Endothelial cell of umbilical vein (primary cell): ENCODE measurements at regions of chr19 and their contacts with region 1.

Region 1: GRCh38 chr19:54297760-54298305 is 15.1 kb downstream of the LILRA5 start:
- DNase-seq: no peak
- H3K4me3 ChIP-seq: no peak overlapping the region
- H3K27ac ChIP-seq: no peak overlapping the region
- H3K4me1 ChIP-seq: no peaks in the 10 kb centered on the region
- H3K27me3 ChIP-seq: no peaks in the 10 kb centered on the region
- CTCF ChIP-seq: no peak
- POLR2A ChIP-seq: no peak

Region 2: DNA sequence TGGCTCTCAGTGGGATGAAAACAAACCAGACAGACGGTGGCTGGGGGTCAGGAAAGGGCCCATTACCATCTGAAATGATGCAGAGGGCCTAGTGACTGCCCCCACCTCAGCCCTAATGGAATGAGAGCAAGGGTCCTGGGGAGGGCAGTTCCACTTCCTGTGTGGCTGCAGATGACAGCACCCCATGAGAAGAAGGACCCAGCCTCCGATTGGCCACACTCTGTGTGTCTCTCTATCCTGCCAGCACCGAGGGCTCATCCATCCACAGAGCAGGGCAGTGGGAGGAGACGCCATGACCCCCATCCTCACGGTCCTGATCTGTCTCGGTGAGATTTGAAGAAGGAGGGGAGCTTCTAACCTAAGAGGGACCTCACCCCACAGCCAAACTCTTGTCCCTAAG is 332.9 kb after region 1 on chr19:
- CTCF ChIA-PET with region 1: no interaction called
- POLR2A ChIA-PET with region 1: no interaction called
- dilution Hi-C with region 1: no loop called
- intact Hi-C with region 1: loop called (anchors 5 kb)
- DNase-seq: no peak
- H3K4me3 ChIP-seq: no peak overlapping the region
- H3K27ac ChIP-seq: no peak overlapping the region
- H3K4me1 ChIP-seq: no peaks in the 10 kb centered on the region
- H3K27me3 ChIP-seq: no peaks in the 10 kb centered on the region
- CTCF ChIP-seq: no peak
- POLR2A ChIP-seq: no peak